ENCODE measurements at regions of chr5 and their contacts with region 1.

Region 1: DNA sequence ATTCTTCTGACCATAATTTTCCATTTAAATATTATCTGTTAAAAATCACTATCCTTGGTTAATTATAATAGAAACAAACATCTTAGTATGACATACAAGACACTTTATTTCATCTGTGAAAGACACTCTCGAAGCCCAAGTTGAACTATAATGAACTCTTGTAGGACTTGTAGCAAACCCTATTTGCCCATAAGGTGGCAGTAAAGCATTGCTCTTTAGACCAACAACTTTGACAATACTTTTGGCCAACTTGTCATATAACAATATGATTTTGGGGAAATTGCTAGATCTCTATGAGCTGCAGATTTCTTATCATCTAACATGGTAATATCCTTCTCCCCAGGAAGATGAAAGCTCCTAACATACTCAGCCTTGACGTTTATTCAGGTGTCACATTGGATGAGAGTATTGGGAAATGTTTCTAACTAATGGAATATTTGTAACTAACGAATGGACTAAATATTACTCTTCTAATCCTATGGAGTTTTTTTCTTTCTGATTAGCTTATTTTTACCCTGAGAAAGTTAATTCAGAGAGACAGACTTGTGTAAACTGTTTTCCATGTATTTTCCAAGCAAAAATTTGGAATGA is 11.0 kb downstream of the SPINK14 start:
- DNase-seq: peak; percentile 4
- ATAC-seq: peak; percentile 67
- H3K4me3 Mint-ChIP-seq: no peak overlapping the region
- H3K27ac Mint-ChIP-seq: no peak overlapping the region
- H3K4me1 Mint-ChIP-seq: no peaks in the 10 kb centered on the region
- H3K27me3 Mint-ChIP-seq: peaks cover 15% of the 10 kb centered on the region
- CTCF ChIP-seq: peak; percentile 72

Region 2: DNA sequence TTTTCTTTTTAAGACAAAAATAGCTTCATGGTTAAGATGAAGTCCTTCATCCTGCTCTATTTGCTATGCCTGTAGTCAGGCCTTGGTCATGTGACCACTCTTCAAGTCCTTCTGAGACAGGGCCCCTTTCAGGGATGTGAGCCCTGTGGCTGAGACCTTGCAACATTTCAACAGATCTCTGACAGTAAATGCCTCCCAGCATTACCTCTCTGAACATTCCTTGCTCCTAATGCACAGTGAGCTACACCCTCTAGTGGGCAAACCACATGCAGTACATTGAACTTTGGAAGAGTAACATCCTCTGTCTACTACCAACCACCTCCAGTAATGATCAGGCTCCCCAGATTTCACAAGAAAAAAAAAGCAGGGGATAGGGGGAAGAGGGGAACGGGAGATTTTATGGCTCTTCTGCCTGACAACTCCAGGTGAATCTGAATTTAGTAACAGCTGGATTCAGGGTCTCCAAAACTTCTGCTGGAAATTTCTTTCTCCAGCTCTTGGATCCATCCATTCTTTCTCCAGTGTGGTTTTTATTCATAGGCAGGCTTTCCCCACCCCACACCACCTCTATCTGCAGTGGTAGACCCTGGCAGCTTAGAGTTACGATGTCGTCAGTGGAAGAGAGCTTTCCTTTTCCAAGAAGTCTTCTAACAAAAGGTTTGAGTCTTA is 195.5 kb after region 1 on chr5:
- CTCF ChIA-PET with region 1: interaction called, 16 read pairs
- POLR2A ChIA-PET with region 1: no interaction called
- intact Hi-C with region 1: loop called (anchors 5 kb)
- DNase-seq: peak; percentile 29
- ATAC-seq: peak; percentile 61
- H3K4me3 Mint-ChIP-seq: no peak overlapping the region
- H3K27ac Mint-ChIP-seq: no peak overlapping the region
- H3K4me1 Mint-ChIP-seq: peaks cover 7% of the 10 kb centered on the region
- H3K27me3 Mint-ChIP-seq: no peaks in the 10 kb centered on the region
- CTCF ChIP-seq: peak; percentile 54

Region 3: DNA sequence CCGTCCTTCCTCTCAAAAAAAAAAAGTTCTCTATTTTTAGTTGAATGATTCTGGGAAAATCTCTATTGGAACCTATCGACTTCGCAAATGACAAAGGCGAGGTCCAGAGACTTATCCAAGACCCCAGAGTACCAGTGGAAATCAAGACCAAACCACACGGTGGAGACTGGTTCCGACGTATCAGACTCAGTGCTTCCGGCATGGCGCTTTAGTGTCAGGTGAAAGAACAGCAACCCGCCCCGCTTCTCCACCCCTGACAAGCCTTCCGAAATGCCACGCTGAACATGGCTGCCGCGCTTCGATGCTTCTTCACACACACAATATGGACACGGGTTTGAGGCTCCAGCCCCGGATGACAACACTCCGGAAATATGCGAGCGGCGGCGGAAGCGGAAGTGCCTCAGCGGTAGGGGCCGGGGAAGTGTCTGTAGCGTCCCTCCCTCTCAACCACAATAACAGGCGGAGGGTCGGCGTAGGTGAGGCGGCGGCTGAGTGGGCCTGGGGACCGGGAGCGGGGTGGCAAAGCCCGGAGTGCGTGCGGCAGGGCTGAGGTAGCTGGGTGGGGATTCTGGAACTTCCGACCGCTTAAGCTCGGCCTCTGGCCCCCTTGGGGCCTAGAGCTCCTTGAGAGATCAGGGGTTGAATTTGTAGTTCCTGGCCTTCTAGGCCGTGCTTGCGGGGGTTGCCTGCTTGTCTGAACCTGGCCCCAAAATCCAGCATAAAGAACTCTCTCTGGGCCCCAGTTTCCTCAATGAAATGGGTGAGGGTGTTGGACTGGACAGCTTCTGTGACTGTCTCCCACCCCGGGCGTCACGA is 204.4 kb after region 1 on chr5 and contains the start of gene FBXO38:
- CTCF ChIA-PET with region 1: interaction called, 4 read pairs
- POLR2A ChIA-PET with region 1: no interaction called
- intact Hi-C with region 1: loop called (anchors 5 kb)
- DNase-seq: peak; percentile 99
- ATAC-seq: peak; percentile 96
- H3K4me3 Mint-ChIP-seq: peak within 1 kb of the TSS; percentile 99
- H3K27ac Mint-ChIP-seq: peak within 1 kb of the TSS; percentile 100
- H3K4me1 Mint-ChIP-seq: peaks cover 63% of the 10 kb centered on the region
- H3K27me3 Mint-ChIP-seq: no peaks in the 10 kb centered on the region
- CTCF ChIP-seq: no peak
- total RNA-seq, gene FBXO38: 38.0 to 39.6 TPM

Region 4: GRCh38 chr5:148443998-148444397 is 264.7 kb after region 1 on chr5:
- CTCF ChIA-PET with region 1: interaction called, 15 read pairs
- POLR2A ChIA-PET with region 1: no interaction called
- intact Hi-C with region 1: no loop called
- DNase-seq: peak; percentile 52
- ATAC-seq: peak; percentile 88
- H3K4me3 Mint-ChIP-seq: no peak overlapping the region
- H3K27ac Mint-ChIP-seq: no peak overlapping the region
- H3K4me1 Mint-ChIP-seq: peaks cover 2% of the 10 kb centered on the region
- H3K27me3 Mint-ChIP-seq: no peaks in the 10 kb centered on the region
- CTCF ChIP-seq: peak; percentile 75

Region 5: DNA sequence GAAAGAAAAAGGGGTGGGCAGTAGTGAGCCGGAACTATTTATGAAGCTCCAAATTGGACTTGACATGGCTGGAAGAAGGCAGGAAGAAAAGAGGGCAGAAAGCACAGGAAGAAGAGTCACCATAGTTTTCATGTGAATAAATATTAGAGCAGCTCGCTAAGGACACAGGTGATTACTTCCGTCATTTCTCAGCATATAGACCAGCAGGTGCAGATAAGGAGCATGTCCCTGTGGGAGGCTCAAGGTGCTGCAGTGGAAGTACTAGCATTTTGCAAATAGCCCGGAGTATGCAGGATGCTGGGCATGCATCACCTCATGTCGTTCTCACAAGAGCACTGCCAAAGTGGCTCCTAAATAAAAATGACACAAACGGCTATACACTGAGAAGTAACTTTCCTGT is 546.3 kb after region 1 on chr5:
- CTCF ChIA-PET with region 1: interaction called, 38 read pairs
- POLR2A ChIA-PET with region 1: no interaction called
- intact Hi-C with region 1: loop called (anchors 5 kb)
- DNase-seq: no peak
- ATAC-seq: no peak
- H3K4me3 Mint-ChIP-seq: no peak overlapping the region
- H3K27ac Mint-ChIP-seq: no peak overlapping the region
- H3K4me1 Mint-ChIP-seq: no peaks in the 10 kb centered on the region
- H3K27me3 Mint-ChIP-seq: peaks cover 13% of the 10 kb centered on the region
- CTCF ChIP-seq: no peak